ENCODE measurements at regions of chr10 and their contacts with region 1.

Region 1: GRCh38 chr10:89837889-89838615 is 136.7 kb downstream of the KIF20B start:
- DNase-seq: no peak
- H3K4me3 ChIP-seq: peak overlapping the region in 1 of 4 experiments; percentile 14; a peak in 1 of 8 replicates
- H3K27ac ChIP-seq: no peak overlapping the region
- H3K4me1 ChIP-seq: no peaks in the 10 kb centered on the region
- H3K27me3 ChIP-seq: no peaks in the 10 kb centered on the region
- CTCF ChIP-seq: no peak
- EP300 ChIP-seq: no peak
- POLR2A ChIP-seq: no peak
- RAD21 ChIP-seq: no peak

Region 2: DNA sequence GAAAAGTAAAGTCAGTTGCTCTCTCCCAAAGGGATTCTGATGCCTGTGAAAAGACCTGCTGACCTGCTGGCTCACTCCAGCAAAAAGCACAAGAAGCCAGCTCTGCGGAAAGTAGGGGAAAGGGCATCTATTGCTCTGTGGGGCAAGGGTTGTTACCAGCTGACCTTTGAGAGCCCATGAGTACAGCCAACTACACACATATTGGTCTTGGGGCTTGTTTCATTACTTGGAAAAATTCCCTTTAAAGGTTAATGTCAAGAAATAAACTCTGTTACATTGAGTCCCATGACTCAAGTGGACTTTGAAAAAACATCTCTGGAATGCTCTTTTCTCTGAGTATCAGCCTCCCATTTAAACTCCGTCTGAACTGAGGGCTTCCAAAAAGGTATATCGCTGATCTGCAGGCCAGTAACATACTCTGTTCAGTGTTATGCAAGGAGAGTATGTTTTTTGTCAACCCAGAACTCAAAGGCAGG is 246.2 kb before region 1 on chr10:
- CTCF ChIA-PET with region 1: no interaction called
- POLR2A ChIA-PET with region 1: no interaction called
- DNase-seq: no peak
- H3K4me3 ChIP-seq: no peak overlapping the region
- H3K27ac ChIP-seq: no peak overlapping the region
- H3K4me1 ChIP-seq: no peaks in the 10 kb centered on the region
- H3K27me3 ChIP-seq: peaks cover 0 to 1% (median 0%) of the 10 kb centered on the region in 4 experiments; a peak in 1 of 7 replicates
- CTCF ChIP-seq: no peak
- EP300 ChIP-seq: no peak
- POLR2A ChIP-seq: no peak
- RAD21 ChIP-seq: no peak

Region 3: GRCh38 chr10:89853781-89854191 is 15.7 kb after region 1 on chr10:
- CTCF ChIA-PET with region 1: interaction called, 17 read pairs
- POLR2A ChIA-PET with region 1: no interaction called
- DNase-seq: peak; percentile 39 to 89
- H3K4me3 ChIP-seq: no peak overlapping the region
- H3K27ac ChIP-seq: no peak overlapping the region
- H3K4me1 ChIP-seq: no peaks in the 10 kb centered on the region
- H3K27me3 ChIP-seq: peaks cover 0 to 2% (median 0%) of the 10 kb centered on the region in 4 experiments; a peak in 1 of 7 replicates
- CTCF ChIP-seq: peak; percentile 74 to 85 (median 84)
- EP300 ChIP-seq: no peak
- POLR2A ChIP-seq: no peak
- RAD21 ChIP-seq: peak; percentile 58 to 66

Region 4: DNA sequence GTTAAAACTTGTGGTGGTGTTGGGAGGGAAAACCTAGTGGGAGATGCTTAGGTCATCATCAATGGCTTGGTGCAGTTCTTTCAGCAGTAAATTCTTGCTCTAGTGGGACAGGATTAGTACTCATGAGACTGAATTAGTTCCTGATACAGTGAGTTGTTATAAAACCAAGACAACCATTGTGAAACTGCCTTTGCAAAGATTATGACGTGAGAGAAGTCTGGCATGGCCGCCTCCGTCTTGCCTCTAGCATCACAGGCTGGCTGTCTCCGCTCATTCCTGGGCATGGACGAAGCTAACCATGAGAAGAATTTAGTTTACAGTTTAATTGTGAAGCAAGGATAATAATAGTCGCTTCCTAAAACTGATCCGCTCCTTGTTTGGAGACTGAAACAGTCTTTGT is 49.8 kb after region 1 on chr10:
- CTCF ChIA-PET with region 1: no interaction called
- POLR2A ChIA-PET with region 1: no interaction called
- DNase-seq: no peak
- H3K4me3 ChIP-seq: no peak overlapping the region
- H3K27ac ChIP-seq: no peak overlapping the region
- H3K4me1 ChIP-seq: no peaks in the 10 kb centered on the region; a peak in 1 of 7 replicates
- H3K27me3 ChIP-seq: no peaks in the 10 kb centered on the region
- CTCF ChIP-seq: no peak
- EP300 ChIP-seq: no peak
- POLR2A ChIP-seq: no peak
- RAD21 ChIP-seq: no peak

Measured in H1 (cell line).